ENCODE measurements at regions of chr13 and their contacts with region 1.

Region 1: GRCh38 chr13:79336966-79337365 is 69.1 kb downstream of the RBM26 start:
- DNase-seq: no peak
- ATAC-seq: no peak
- H3K4me3 ChIP-seq: no peak overlapping the region
- H3K27ac ChIP-seq: no peak overlapping the region
- H3K4me1 ChIP-seq: no peaks in the 10 kb centered on the region
- H3K27me3 ChIP-seq: no peaks in the 10 kb centered on the region
- CTCF ChIP-seq: no peak

Region 2: GRCh38 chr13:79365981-79366380 is 29.0 kb after region 1 on chr13:
- intact Hi-C with region 1: loop called in 1 of 10 experiments (anchors 5 kb)
- DNase-seq: no peak
- ATAC-seq: no peak
- H3K4me3 ChIP-seq: no peak overlapping the region
- H3K27ac ChIP-seq: no peak overlapping the region
- H3K4me1 ChIP-seq: peaks cover 0 to 11% (median 4%) of the 10 kb centered on the region in 9 donors
- H3K27me3 ChIP-seq: no peaks in the 10 kb centered on the region
- CTCF ChIP-seq: no peak

Region 3: GRCh38 chr13:79782541-79783205 is 445.7 kb after region 1 on chr13:
- intact Hi-C with region 1: no loop called
- DNase-seq: peak; percentile 62 to 77
- ATAC-seq: peak; percentile 90 to 99 (median 96)
- H3K4me3 ChIP-seq: peak overlapping the region in 3 of 10 donors; percentile 0 to 9 (median 3)
- H3K27ac ChIP-seq: peak overlapping the region in 6 of 10 donors; percentile 27 to 56 (median 44)
- H3K4me1 ChIP-seq: peaks cover 0 to 28% (median 15%) of the 10 kb centered on the region in 9 donors
- H3K27me3 ChIP-seq: no peaks in the 10 kb centered on the region
- CTCF ChIP-seq: no peak

Measured in heart right ventricle (tissue), 16 donors.